ENCODE measurements at regions of chr1 and their contacts with region 1.

Region 1: DNA sequence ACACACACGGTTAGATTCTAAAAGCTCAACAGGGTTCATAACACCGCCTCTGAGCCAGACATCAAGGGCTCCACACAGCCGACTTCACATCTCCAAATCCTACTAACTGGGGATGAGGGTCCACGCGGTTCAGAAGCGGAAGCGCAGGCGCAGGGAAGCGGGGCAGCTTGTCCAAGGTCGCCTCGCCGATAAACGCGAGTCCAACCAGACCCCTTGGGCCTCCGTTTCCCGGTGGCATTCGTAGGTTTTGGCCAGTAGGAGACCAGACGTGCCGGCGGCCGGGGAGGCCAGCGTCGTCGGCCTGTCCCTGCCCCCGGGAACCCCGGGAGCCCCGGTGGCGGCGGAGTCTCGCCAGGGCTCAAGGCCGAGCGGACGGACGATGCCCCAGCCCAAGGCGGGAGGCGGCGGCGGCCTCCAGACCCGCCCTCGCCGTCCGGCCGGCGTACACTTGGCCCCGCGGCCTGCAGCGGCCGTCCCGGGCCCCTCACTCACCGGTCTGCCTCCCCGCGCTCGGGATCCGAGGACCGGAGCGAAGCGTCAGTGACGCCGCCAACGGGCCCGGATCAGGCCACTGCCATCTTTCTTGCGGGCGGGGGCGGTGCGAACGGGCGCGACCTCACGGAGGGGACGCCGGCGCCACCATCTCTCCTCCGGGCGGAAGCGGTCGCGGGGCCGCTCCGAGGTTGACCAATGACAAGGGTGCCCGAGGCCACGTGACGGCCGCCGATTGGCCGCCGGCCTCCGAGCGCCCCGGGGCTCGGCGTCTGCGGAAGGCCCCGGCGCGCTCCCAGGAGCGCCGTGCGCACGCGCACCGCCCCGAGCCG is at the start of gene SDF4:
- DNase-seq: peak; percentile 95
- H3K4me3 ChIP-seq: peak within 1 kb of the TSS; percentile 70 to 96 (median 72)
- H3K27ac ChIP-seq: peak within 1 kb of the TSS; percentile 79
- H3K4me1 ChIP-seq: peaks cover 15% of the 10 kb centered on the region
- H3K27me3 ChIP-seq: no peaks in the 10 kb centered on the region
- CTCF ChIP-seq: no peak
- total RNA-seq, gene SDF4: 99.5 to 124 TPM

Region 2: DNA sequence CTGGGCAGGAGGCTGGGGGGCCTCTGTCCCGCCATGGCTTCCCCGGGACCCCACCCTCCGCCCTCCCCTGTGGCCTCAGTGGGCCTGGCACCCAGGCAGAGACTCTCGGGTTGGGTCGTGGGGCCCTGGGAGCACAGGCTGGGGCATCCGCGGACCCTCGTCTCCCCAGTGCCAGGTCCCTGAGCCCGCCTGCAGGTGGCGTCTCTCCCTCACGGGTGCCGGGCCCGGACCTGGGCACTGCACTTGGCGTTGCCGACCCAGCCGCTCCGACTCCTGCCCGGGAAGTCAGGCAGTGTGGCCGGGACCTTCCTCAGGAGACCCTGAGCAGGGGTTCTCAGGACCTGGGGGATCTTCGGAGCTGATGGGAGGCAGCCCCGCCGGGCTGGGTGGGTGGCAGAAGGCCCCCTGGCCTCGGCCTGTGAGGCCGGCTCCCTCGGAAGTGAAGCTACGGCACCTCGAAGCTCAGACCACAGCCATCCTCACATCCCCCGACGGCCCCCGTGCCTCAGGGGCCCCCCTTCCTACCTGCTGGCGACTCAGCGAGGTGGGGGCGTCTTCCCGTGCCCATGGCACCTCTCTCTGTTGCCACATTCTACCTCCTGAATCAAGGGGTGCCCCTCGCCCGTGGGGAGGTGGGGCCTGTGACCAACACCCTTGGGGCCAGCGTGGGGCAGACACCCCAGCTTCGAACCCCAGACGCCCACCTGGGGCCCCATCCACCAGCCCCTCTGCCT is 109.4 kb before region 1 on chr1:
- CTCF ChIA-PET with region 1: interaction called, 3 read pairs
- dilution Hi-C with region 1: loop called (anchors 5 kb)
- in situ Hi-C with region 1: no loop called
- intact Hi-C with region 1: loop called (anchors 1 kb)
- DNase-seq: peak; percentile 51
- H3K4me3 ChIP-seq: peak overlapping the region; percentile 22 to 39 (median 32)
- H3K27ac ChIP-seq: no peak overlapping the region
- H3K4me1 ChIP-seq: peaks cover 9% of the 10 kb centered on the region
- H3K27me3 ChIP-seq: peaks cover 2% of the 10 kb centered on the region
- CTCF ChIP-seq: peak; percentile 69 to 92

Region 3: GRCh38 chr1:1185101-1185765 is 46.4 kb before region 1 on chr1:
- CTCF ChIA-PET with region 1: no interaction called
- dilution Hi-C with region 1: no loop called
- in situ Hi-C with region 1: no loop called
- intact Hi-C with region 1: loop called (anchors 2 kb)
- DNase-seq: no peak
- H3K4me3 ChIP-seq: no peak overlapping the region
- H3K27ac ChIP-seq: no peak overlapping the region
- H3K4me1 ChIP-seq: peaks cover 6% of the 10 kb centered on the region
- H3K27me3 ChIP-seq: no peaks in the 10 kb centered on the region
- CTCF ChIP-seq: no peak

Region 4: GRCh38 chr1:1273512-1274298 is 42.1 kb after region 1 on chr1 and contains the start of gene UBE2J2:
- CTCF ChIA-PET with region 1: no interaction called
- dilution Hi-C with region 1: no loop called
- in situ Hi-C with region 1: no loop called
- intact Hi-C with region 1: loop called (anchors 5 kb)
- DNase-seq: peak; percentile 74
- H3K4me3 ChIP-seq: peak within 1 kb of the TSS; percentile 59 to 87 (median 80)
- H3K27ac ChIP-seq: peak within 1 kb of the TSS; percentile 46
- H3K4me1 ChIP-seq: peaks cover 31% of the 10 kb centered on the region
- H3K27me3 ChIP-seq: no peaks in the 10 kb centered on the region
- CTCF ChIP-seq: no peak
- total RNA-seq, gene UBE2J2: 36.7 to 59.7 TPM

Measured in mammary epithelial cell (primary cell).